Heart left ventricle (tissue), 16 donors: ENCODE measurements at regions of chr6 and their contacts with region 1.

Region 1: GRCh38 chr6:132962936-132963868 is 148.8 kb downstream of the RPS12 start:
- DNase-seq: peak; percentile 44 to 76 (median 71)
- ATAC-seq: peak; percentile 74 to 87 (median 78)
- H3K4me3 ChIP-seq: no peak overlapping the region
- H3K27ac ChIP-seq: no peak overlapping the region
- H3K4me1 ChIP-seq: peaks cover 0 to 22% (median 7%) of the 10 kb centered on the region in 12 donors
- H3K27me3 ChIP-seq: no peaks in the 10 kb centered on the region
- CTCF ChIP-seq: peak; percentile 53 to 70 (median 60)
- POLR2A ChIP-seq: no peak

Region 2: GRCh38 chr6:133055441-133055966 is 92.3 kb after region 1 on chr6:
- intact Hi-C with region 1: loop called in 1 of 10 experiments (anchors 5 kb)
- DNase-seq: no peak
- ATAC-seq: peak; percentile 48 to 59 (median 54)
- H3K4me3 ChIP-seq: no peak overlapping the region
- H3K27ac ChIP-seq: peak overlapping the region in 8 of 12 donors; percentile 26 to 66 (median 52)
- H3K4me1 ChIP-seq: peaks cover 0 to 16% (median 0%) of the 10 kb centered on the region in 12 donors
- H3K27me3 ChIP-seq: no peaks in the 10 kb centered on the region
- CTCF ChIP-seq: no peak
- POLR2A ChIP-seq: no peak

Region 3: GRCh38 chr6:133159255-133159795 is 196.1 kb after region 1 on chr6:
- intact Hi-C with region 1: loop called in 2 of 10 experiments (anchors 10 kb)
- DNase-seq: no peak
- ATAC-seq: no peak
- H3K4me3 ChIP-seq: no peak overlapping the region
- H3K27ac ChIP-seq: no peak overlapping the region
- H3K4me1 ChIP-seq: no peaks in the 10 kb centered on the region
- H3K27me3 ChIP-seq: no peaks in the 10 kb centered on the region
- CTCF ChIP-seq: no peak
- POLR2A ChIP-seq: no peak

Region 4: DNA sequence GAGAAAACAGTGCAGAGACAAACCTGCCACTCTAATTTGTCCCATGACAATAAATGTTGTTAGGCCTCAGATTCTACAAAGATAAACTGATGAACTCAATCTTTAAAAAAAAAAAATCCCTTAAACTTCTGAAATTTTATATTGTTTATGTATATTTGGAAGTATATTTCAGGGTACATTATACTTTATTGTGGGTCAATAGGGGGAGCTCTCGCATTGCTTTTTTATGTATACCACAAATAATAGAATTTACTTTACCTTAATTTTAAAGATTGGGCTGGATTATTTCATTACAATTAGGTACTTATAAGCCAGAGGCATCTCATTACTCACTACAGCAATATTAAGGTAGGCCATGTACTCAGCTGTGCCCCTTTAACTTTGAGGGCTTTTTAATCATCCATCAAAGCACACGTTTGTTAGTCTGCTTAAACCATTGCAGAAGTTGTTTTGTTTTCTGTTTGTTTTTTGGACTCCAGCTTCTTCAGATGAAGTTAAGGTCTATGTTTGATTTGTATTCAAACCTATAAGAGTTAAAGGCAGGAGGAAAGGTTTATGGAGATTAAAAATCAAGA is 221.7 kb after region 1 on chr6:
- intact Hi-C with region 1: loop called in 3 of 10 experiments (anchors 5 to 10 kb)
- DNase-seq: no peak
- ATAC-seq: no peak
- H3K4me3 ChIP-seq: no peak overlapping the region
- H3K27ac ChIP-seq: no peak overlapping the region
- H3K4me1 ChIP-seq: no peaks in the 10 kb centered on the region
- H3K27me3 ChIP-seq: no peaks in the 10 kb centered on the region
- CTCF ChIP-seq: peak; percentile 25 to 67 (median 52)
- POLR2A ChIP-seq: no peak

Region 5: DNA sequence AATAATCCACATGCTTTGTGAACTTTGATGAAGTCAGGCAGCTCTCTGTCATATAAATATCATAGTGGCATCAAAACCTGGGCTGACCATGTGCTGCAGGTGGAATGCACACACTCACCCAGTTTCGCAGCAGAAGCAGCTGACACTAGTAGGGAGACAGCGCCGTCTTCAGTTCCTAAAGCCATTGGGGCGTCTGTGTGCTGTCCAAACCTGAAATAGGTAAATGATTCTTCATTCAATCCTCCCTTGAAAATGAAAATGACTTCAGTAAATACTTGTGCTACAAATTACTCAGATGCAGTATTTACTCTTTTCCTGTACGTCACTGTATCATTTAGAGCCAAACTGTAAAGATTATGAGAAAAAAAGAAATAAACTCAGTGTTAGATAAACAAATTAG is 405.5 kb after region 1 on chr6:
- intact Hi-C with region 1: loop called in 1 of 10 experiments (anchors 5 kb)
- DNase-seq: peak in 2 of 5 donors; percentile 25 to 27
- ATAC-seq: peak in 3 of 4 donors; percentile 36 to 66 (median 59)
- H3K4me3 ChIP-seq: no peak overlapping the region
- H3K27ac ChIP-seq: no peak overlapping the region
- H3K4me1 ChIP-seq: peaks cover 0 to 11% (median 0%) of the 10 kb centered on the region in 12 donors
- H3K27me3 ChIP-seq: no peaks in the 10 kb centered on the region
- CTCF ChIP-seq: peak in 5 of 12 donors; percentile 8 to 19 (median 13)
- POLR2A ChIP-seq: no peak

Region 6: GRCh38 chr6:133553652-133554051 is 590.5 kb after region 1 on chr6:
- intact Hi-C with region 1: loop called in 3 of 10 experiments (anchors 5 to 10 kb)
- DNase-seq: peak in 2 of 5 donors; percentile 23 to 33
- ATAC-seq: peak in 3 of 4 donors; percentile 61 to 75 (median 63)
- H3K4me3 ChIP-seq: no peak overlapping the region
- H3K27ac ChIP-seq: no peak overlapping the region
- H3K4me1 ChIP-seq: peaks cover 0 to 16% (median 4%) of the 10 kb centered on the region in 12 donors
- H3K27me3 ChIP-seq: no peaks in the 10 kb centered on the region
- CTCF ChIP-seq: peak; percentile 33 to 70 (median 56)
- POLR2A ChIP-seq: no peak

Region 7: DNA sequence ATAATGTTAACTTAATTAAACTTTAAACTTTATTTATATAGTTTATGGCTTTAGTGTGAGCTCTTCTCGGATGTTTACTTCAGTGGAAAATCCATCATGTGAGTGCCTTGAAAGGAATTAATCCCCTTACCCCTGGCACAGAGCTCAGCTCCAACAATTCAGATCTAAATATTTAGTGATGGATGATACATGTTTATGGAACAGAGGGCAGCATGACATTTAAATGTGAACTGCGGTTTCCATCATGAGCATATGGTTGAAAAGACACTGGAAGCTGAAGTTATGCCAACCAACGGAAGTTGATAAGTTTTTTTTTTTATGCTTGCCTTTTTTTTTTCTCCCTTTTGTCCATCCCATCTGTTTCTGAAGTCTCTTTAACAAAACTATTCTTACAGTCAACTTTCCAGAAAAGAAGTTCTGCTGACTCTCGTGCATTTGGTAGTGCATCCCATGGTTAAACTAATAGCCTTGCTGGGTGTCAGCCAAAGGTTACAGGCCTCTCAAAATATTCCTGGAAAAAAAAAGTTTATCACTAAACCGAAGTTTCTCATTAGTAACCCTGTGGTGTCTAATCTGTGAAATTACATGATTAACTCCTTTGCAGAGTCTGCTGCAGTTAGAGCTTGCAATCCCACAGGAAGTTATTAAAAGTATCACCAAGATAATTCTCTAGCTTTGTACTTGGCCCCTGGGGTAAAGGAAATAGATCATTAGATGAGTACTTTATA is 681.9 kb after region 1 on chr6:
- intact Hi-C with region 1: no loop called
- DNase-seq: peak in 2 of 5 donors; percentile 16 to 24
- ATAC-seq: peak in 2 of 4 donors; percentile 43 to 59
- H3K4me3 ChIP-seq: no peak overlapping the region
- H3K27ac ChIP-seq: peak overlapping the region in 2 of 12 donors; percentile 25 to 26
- H3K4me1 ChIP-seq: peaks cover 0 to 9% (median 0%) of the 10 kb centered on the region in 12 donors
- H3K27me3 ChIP-seq: no peaks in the 10 kb centered on the region
- CTCF ChIP-seq: no peak
- POLR2A ChIP-seq: no peak